CD8-positive, alpha-beta T cell (primary cell): ENCODE measurements at regions of chr12 and their contacts with region 1.

Region 1: DNA sequence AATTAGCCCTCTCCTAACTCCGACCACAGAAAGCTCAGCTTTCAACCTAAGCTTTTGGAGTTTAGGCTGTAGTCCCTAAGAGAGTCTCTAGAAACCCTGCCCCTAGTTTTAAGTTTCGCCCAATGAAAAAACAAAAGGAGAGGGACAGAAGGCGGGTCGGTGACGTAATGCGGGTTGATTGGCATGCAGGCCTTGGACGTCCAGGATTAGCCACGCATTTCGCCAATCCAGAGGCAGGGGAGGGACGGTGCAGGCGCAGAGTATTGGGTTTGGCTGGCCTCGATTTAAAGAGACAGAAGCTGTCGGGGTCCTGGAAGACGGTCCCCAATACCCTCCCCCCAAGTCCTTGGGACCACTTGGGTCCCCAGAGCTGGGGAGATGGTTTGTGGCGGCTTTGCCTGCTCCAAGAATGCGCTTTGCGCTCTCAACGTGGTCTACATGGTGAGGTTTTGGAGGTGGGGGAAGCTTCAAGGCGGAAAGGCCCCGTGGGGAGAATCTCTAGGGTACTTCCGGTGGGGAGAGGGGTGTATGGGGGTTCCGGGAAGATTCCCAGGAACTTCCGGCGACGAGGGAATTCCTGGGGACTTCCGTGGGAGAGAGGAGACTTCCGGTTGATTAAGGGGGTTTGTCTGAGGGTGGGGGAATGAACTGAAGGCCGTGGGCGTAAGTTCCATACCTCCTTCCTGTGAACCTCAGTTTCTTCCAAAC is at the start of gene TSPAN31:
- DNase-seq: peak; percentile 85 to 99 (median 94)
- ATAC-seq: peak; percentile 82
- H3K4me3 ChIP-seq: peak within 1 kb of the TSS; percentile 62 to 70
- H3K4me3 Mint-ChIP-seq: peak within 1 kb of the TSS; percentile 91
- H3K27ac ChIP-seq: peak within 1 kb of the TSS; percentile 84 to 94
- H3K27ac Mint-ChIP-seq: peak within 1 kb of the TSS; percentile 93
- H3K4me1 ChIP-seq: peaks cover 40% of the 10 kb centered on the region
- H3K4me1 Mint-ChIP-seq: peaks cover 53% of the 10 kb centered on the region
- H3K27me3 ChIP-seq: no peaks in the 10 kb centered on the region
- H3K27me3 Mint-ChIP-seq: no peaks in the 10 kb centered on the region
- CTCF ChIP-seq: no peak
- total RNA-seq, gene TSPAN31: 7.3 to 8.0 TPM

Region 2: GRCh38 chr12:56127888-56128669 is 1616.9 kb before region 1 on chr12 and contains the start of gene ESYT1:
- CTCF ChIA-PET with region 1: no interaction called
- POLR2A ChIA-PET with region 1: no interaction called
- intact Hi-C with region 1: loop called in 1 of 2 experiments (anchors 5 kb)
- DNase-seq: peak; percentile 94 to 100 (median 96)
- ATAC-seq: peak; percentile 87
- H3K4me3 ChIP-seq: peak within 1 kb of the TSS; percentile 71 to 97
- H3K4me3 Mint-ChIP-seq: peak within 1 kb of the TSS; percentile 97
- H3K27ac ChIP-seq: peak within 1 kb of the TSS; percentile 79 to 86
- H3K27ac Mint-ChIP-seq: peak within 1 kb of the TSS; percentile 94
- H3K4me1 ChIP-seq: peaks cover 60% of the 10 kb centered on the region
- H3K4me1 Mint-ChIP-seq: peaks cover 64% of the 10 kb centered on the region
- H3K27me3 ChIP-seq: no peaks in the 10 kb centered on the region
- H3K27me3 Mint-ChIP-seq: no peaks in the 10 kb centered on the region
- CTCF ChIP-seq: no peak
- total RNA-seq, gene ESYT1: 82.4 to 83.0 TPM

Region 3: GRCh38 chr12:57520053-57520871 is 224.7 kb before region 1 on chr12 and contains the start of gene DDIT3:
- CTCF ChIA-PET with region 1: no interaction called
- POLR2A ChIA-PET with region 1: no interaction called
- intact Hi-C with region 1: loop called in 1 of 2 experiments (anchors 2 kb)
- DNase-seq: peak; percentile 99 to 100 (median 100)
- ATAC-seq: peak; percentile 76
- H3K4me3 ChIP-seq: peak within 1 kb of the TSS; percentile 83 to 94
- H3K4me3 Mint-ChIP-seq: peak within 1 kb of the TSS; percentile 98
- H3K27ac ChIP-seq: peak within 1 kb of the TSS; percentile 97 to 100
- H3K27ac Mint-ChIP-seq: peak within 1 kb of the TSS; percentile 100
- H3K4me1 ChIP-seq: peaks cover 53% of the 10 kb centered on the region
- H3K4me1 Mint-ChIP-seq: peaks cover 54% of the 10 kb centered on the region
- H3K27me3 ChIP-seq: no peaks in the 10 kb centered on the region
- H3K27me3 Mint-ChIP-seq: no peaks in the 10 kb centered on the region
- CTCF ChIP-seq: no peak
- total RNA-seq, gene DDIT3: 137 to 143 TPM

Region 4: DNA sequence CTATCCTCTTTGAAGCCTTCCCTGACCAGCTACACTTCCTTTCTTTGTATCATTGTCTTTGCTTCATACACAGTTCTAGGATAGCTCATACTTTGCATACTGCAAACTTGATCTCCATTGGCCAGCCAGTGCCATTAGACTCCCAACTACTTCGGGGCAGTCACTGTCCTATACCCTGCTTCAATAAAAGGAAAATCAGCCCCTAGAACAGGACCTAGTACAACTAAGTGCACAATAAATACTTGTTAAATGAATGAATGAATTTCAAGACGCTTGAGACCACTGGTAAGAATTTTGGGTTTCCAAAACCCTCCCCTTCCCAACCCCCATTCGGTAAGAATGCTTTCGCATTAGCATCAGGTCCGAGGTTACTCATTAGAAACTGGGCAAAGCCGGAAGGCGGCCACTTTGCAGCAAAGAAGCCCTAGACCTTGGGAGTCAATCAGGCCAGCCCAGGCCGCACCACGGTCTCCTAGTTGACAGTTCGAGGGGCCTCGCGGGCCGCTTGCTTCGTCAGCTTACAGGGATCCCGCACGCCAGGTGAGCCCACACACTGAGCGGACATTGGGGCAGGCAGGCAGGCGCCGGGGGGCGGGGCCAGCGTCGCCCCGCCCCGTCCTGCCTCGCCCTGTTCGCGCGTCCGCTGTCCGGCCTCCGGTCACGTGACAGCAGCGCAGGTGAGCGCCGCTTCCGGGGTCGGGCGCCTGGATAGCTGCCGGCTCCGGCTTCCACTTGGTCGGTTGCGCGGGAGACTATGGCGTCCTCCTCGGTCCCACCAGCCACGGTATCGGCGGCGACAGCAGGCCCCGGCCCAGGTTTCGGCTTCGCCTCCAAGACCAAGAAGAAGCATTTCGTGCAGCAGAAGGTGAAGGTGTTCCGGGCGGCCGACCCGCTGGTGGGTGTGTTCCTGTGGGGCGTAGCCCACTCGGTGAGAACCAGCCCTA is 154.1 kb before region 1 on chr12 and contains the start of gene PIP4K2C:
- CTCF ChIA-PET with region 1: no interaction called
- POLR2A ChIA-PET with region 1: no interaction called
- intact Hi-C with region 1: loop called in 1 of 2 experiments (anchors 2 kb)
- DNase-seq: peak; percentile 28 to 93 (median 74)
- ATAC-seq: peak; percentile 87
- H3K4me3 ChIP-seq: peak within 1 kb of the TSS; percentile 61 to 97
- H3K4me3 Mint-ChIP-seq: peak within 1 kb of the TSS; percentile 85
- H3K27ac ChIP-seq: peak within 1 kb of the TSS; percentile 55 to 79
- H3K27ac Mint-ChIP-seq: peak within 1 kb of the TSS; percentile 83
- H3K4me1 ChIP-seq: peaks cover 23% of the 10 kb centered on the region
- H3K4me1 Mint-ChIP-seq: peaks cover 32% of the 10 kb centered on the region
- H3K27me3 ChIP-seq: peaks cover 0 to 5% of the 10 kb centered on the region in 2 experiments
- H3K27me3 Mint-ChIP-seq: no peaks in the 10 kb centered on the region
- CTCF ChIP-seq: no peak
- total RNA-seq, gene PIP4K2C: 16.4 to 20.1 TPM

Region 5: GRCh38 chr12:57632694-57633477 is 112.0 kb before region 1 on chr12 and contains the start of gene B4GALNT1:
- CTCF ChIA-PET with region 1: interaction called, 3 read pairs
- POLR2A ChIA-PET with region 1: no interaction called
- intact Hi-C with region 1: loop called (anchors 1 to 5 kb)
- DNase-seq: peak; percentile 39 to 79 (median 55)
- ATAC-seq: peak; percentile 92
- H3K4me3 ChIP-seq: peak within 1 kb of the TSS; percentile 50 to 57
- H3K4me3 Mint-ChIP-seq: peak within 1 kb of the TSS; percentile 71
- H3K27ac ChIP-seq: no peak within 1 kb of the TSS
- H3K27ac Mint-ChIP-seq: no peak within 1 kb of the TSS
- H3K4me1 ChIP-seq: peaks cover 13% of the 10 kb centered on the region
- H3K4me1 Mint-ChIP-seq: peaks cover 12% of the 10 kb centered on the region
- H3K27me3 ChIP-seq: peaks cover 10 to 28% of the 10 kb centered on the region in 2 experiments
- H3K27me3 Mint-ChIP-seq: peaks cover 53% of the 10 kb centered on the region
- CTCF ChIP-seq: peak; percentile 86
- total RNA-seq, gene B4GALNT1: not detected

Region 6: DNA sequence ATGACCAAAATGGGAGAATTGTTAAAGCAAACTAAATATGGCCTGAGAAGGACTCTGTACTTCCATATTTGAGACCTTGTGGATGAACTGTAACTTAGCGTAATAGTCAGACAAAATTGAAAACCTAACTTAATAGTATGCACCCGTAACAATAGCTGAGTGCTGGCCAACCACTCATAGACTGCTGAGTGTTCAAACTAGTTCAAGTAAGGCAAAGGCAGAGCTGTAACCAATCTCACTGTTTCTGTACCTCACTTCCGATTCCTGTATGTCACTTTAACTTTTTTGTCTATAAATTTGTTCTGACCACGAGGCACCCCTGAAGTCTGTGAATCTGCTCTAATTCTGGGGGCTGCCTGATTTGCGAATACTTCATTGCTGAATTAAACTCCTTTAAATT is 78.0 kb before region 1 on chr12:
- CTCF ChIA-PET with region 1: no interaction called
- POLR2A ChIA-PET with region 1: no interaction called
- intact Hi-C with region 1: no loop called
- DNase-seq: no peak
- ATAC-seq: no peak
- H3K4me3 ChIP-seq: no peak overlapping the region
- H3K4me3 Mint-ChIP-seq: no peak overlapping the region
- H3K27ac ChIP-seq: no peak overlapping the region
- H3K27ac Mint-ChIP-seq: no peak overlapping the region
- H3K4me1 ChIP-seq: no peaks in the 10 kb centered on the region
- H3K4me1 Mint-ChIP-seq: no peaks in the 10 kb centered on the region
- H3K27me3 ChIP-seq: no peaks in the 10 kb centered on the region
- H3K27me3 Mint-ChIP-seq: peaks cover 2% of the 10 kb centered on the region
- CTCF ChIP-seq: no peak

Region 7: DNA sequence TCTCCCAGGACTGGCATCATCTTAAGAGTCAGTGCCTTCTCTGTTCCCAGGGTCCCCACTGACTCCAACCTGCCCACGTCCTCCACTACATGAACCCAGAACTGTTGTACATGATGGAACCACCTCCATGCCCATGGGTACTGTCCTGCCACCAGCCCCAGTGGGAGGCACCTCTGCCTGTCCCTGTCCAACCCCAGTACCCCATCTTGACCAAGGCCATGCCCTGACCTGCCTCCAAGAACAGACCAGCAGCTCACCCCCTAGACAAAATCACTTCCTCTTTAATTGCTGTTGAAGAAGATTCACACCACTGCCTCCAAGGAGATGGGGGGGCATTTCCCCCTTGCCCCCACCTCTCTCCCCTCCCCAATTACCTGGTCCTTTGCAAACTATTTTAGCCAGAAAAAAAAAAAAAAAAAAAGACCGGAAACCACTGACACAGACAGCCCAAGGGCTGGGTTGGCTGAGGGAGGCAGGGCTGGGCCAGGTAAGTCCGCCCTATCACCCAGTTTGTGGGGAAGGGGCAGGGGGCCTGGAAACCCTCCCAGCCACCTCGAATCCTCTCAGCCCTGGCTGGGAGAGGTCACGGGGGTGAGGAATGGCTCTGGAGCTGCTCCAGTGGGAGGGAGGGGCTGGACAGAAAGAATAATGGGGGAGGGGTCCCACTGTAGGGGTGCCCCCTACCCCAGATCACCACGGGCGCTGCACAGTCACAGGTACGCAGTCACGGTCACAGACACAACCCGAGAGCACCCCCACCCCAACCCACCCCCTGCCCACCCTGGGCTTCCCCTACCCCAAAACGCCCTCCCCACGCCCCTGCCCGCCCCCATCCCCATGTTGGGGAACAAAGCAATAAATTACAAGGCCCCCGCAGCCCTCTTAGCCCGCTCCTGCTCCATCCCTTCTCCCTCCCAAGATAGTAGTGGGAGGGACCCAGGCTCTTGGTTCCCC is 19.7 kb before region 1 on chr12:
- CTCF ChIA-PET with region 1: interaction called, 9 read pairs
- POLR2A ChIA-PET with region 1: interaction called, 9 read pairs
- intact Hi-C with region 1: loop called in 1 of 2 experiments (anchors 2 kb)
- DNase-seq: peak in 1 of 9 experiments; percentile 48
- ATAC-seq: peak; percentile 13
- H3K4me3 ChIP-seq: no peak overlapping the region
- H3K4me3 Mint-ChIP-seq: no peak overlapping the region
- H3K27ac ChIP-seq: no peak overlapping the region
- H3K27ac Mint-ChIP-seq: peak overlapping the region; percentile 83
- H3K4me1 ChIP-seq: no peaks in the 10 kb centered on the region
- H3K4me1 Mint-ChIP-seq: peaks cover 23% of the 10 kb centered on the region
- H3K27me3 ChIP-seq: no peaks in the 10 kb centered on the region
- H3K27me3 Mint-ChIP-seq: no peaks in the 10 kb centered on the region
- CTCF ChIP-seq: no peak

Region 8: DNA sequence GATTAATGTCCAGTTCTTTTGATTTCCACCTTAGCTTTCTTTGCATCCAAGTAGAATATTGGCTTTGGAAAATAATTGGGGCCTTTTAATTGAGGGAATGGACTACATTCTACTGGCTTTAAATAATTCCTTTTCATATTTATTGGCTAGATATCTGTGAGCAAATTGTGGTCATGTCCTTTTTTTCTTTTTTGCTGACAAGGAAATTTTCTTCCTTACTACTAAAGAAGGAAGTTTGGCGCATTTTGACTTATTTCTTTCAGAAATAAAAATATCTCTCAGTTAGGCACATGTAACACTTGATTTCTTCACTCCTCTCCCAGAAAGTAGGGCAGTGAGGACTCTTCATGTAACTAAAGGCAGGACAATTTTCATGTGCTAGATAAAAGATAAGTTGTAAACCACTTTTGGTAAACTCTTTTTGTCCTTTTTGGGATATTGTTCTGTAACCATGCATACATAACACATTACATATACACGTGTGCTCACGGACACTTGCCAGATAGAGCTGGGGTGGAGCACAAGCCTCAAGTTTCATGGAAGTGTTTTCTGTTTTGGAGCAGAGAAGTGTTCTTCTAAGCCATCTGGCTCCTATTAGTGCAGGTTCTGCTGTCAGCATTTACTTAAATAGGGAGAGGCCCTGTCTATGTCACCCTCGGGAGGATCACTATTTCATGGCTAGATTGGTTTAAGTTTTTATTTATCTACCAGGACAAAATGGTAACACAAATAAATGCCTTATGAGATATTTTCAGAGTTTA is 1260.4 kb after region 1 on chr12:
- CTCF ChIA-PET with region 1: no interaction called
- POLR2A ChIA-PET with region 1: no interaction called
- intact Hi-C with region 1: no loop called
- DNase-seq: no peak
- ATAC-seq: no peak
- H3K4me3 ChIP-seq: no peak overlapping the region
- H3K4me3 Mint-ChIP-seq: no peak overlapping the region
- H3K27ac ChIP-seq: no peak overlapping the region
- H3K27ac Mint-ChIP-seq: no peak overlapping the region
- H3K4me1 ChIP-seq: no peaks in the 10 kb centered on the region
- H3K4me1 Mint-ChIP-seq: no peaks in the 10 kb centered on the region
- H3K27me3 ChIP-seq: no peaks in the 10 kb centered on the region
- H3K27me3 Mint-ChIP-seq: no peaks in the 10 kb centered on the region
- CTCF ChIP-seq: no peak